Posterior vena cava (tissue), 2 donors: ENCODE measurements at regions of chr17 and their contacts with region 1.

Region 1: DNA sequence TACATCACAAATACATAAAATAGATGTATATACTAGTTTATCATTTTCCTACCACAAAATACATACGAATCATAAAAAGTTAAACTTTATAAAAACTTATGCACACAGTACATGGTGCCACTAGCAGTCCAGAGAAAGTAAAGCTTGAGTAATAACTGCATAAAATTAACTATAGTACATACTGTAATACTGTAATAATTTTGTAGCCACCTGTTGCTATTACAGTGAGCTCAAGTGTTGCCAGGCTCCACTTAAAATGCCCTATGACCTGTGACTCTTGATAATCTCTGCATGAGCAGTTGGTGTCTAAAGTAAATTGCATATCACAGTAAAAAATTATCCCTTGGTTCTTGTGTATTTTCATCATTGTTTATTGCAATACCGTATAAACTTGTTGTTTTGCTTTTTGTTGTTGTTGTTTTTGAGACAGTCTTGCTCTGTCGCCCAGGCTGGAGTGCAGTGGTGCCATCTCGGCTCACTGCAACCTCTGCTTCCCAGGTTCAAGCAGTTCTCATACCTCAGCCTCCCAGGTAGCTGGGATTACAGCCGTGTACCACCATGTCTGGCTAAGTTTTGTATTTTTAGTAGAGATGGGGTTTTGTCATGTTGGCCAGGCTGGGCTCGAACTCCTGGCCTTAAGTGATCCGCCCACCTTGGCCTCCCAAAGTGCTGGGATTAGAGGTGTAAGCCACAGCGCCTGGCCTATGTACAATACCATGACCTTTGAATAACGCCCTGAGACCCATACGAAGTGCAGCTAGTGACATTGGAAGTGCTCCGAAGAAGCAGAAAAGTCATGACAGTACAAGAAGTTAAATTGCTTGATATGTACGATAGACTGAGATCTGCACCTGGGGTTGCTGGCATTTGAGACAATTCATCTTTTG is 6.6 kb downstream of the LUC7L3 start:
- DNase-seq: no peak

Region 2: DNA sequence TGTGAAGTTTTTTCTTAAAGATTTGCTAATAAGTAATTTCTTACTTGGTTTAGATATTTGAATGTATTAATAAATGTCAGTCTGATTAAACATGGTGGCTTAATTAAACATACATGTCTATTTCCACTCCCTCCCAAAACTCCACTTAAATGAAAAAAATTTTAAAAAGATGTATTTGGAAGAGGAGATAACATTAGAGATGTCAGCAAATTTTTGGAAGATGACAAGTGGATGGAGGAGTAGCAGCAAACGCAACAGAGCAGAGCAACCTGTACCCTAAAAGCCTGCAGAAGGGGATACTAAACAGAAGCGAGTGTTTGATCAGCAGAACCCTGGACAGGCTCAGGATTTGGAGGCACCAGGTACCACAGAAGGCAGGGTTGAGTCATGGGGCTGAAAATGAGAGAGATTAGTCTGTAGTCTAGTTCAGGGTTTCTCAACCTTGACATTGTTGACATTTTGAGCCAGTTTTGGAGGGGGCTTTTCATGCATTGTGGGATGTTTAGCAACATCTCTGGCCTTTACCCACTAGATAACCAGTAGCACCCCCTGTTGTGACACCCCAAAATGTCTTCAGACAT is 11.2 kb after region 1 on chr17:
- intact Hi-C with region 1: loop called in 1 of 2 experiments (anchors 2 kb)
- DNase-seq: no peak

Region 3: DNA sequence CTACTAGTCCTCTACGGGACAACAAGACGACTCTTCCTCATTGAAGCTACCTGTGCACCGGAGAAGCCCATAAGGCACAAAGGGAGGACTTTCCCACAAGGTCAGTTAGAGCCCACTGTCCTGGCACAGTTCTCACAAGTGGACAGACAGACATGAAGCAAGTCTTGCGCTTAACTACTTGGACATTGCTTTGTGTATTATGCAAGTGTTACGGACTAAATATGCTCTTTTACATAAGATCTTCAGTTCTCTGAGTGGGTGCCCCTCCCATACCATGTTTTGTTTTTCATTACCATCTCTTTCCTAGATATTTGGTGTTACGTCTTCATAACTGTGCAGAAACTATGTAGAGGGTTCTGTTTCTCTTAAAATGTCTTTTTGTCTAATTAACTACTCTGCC is 23.2 kb after region 1 on chr17:
- intact Hi-C with region 1: no loop called
- DNase-seq: no peak